ENCODE measurements at regions of chr6 and their contacts with region 1.

Region 1: DNA sequence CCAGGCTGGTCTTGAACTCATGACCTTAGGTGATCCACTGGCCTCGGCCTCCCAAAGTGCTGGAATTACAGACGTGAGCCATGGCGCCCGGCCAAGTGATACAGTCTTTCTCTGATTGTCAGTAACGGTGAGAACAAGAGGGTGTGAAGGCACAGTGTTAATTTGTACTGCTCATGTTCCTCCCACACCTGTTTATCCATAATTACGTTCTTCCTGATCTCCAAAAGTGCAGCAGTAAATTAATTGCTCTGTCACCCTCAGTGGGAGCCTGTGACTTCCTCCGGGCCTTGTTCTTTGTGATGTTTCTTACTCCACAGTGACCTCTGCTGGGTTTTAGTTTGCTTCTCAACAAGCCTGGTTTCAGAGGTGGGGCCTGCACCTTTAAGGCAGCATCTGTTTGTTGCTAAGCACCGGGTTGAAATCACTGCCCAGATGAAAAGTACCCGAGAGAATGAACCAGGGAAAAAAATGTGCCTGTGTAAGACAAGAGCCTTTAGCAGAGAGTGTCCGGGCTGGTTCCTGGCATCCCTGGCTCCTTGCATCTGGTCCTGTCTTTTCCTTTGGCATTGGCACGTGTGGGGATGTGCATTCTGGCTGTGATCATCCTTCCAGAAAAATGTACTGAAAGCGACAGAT is 89.1 kb upstream of the CLDN20 start:
- DNase-seq: peak; percentile 82
- ATAC-seq: peak; percentile 67
- H3K4me3 Mint-ChIP-seq: no peak overlapping the region
- H3K27ac Mint-ChIP-seq: peak overlapping the region; percentile 75
- H3K4me1 Mint-ChIP-seq: peaks cover 42% of the 10 kb centered on the region
- H3K27me3 Mint-ChIP-seq: no peaks in the 10 kb centered on the region

Region 2: GRCh38 chr6:154675602-154676088 is 499.0 kb before region 1 on chr6:
- CTCF ChIA-PET with region 1: interaction called, 36 read pairs
- POLR2A ChIA-PET with region 1: no interaction called
- DNase-seq: peak; percentile 92
- ATAC-seq: peak; percentile 100
- H3K4me3 Mint-ChIP-seq: no peak overlapping the region
- H3K27ac Mint-ChIP-seq: no peak overlapping the region
- H3K4me1 Mint-ChIP-seq: no peaks in the 10 kb centered on the region
- H3K27me3 Mint-ChIP-seq: peaks cover 4% of the 10 kb centered on the region

Region 3: DNA sequence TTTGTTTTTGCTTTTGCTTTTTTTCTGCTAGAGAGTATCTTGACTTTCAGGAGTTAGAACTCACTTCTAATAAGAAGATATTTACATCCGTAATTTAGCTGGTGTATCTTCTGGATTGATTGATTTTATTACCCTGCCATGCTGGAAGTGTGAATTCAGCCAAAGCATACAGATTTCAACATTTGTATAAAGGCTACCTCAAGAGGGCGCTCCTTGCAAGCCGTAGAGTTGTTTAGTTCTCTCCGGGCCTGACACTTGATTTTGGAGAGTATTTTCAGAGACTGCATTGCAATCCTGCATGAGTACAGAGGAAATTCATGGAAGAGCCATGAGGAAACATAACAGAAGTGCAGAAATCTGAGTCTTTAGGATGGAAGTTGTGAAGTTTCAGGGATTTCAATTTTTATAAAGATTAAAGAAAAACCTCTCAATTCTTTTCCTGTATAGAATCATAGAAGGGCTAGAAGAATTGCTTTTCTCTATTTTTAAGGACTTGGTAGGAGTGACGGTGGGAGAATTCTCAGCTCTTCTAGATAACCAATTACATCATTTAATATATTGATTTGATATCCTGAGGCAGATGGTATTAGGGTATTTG is 246.3 kb before region 1 on chr6:
- CTCF ChIA-PET with region 1: interaction called, 82 read pairs
- POLR2A ChIA-PET with region 1: interaction called, 7 read pairs
- DNase-seq: peak; percentile 80
- ATAC-seq: peak; percentile 77
- H3K4me3 Mint-ChIP-seq: no peak overlapping the region
- H3K27ac Mint-ChIP-seq: no peak overlapping the region
- H3K4me1 Mint-ChIP-seq: peaks cover 6% of the 10 kb centered on the region
- H3K27me3 Mint-ChIP-seq: no peaks in the 10 kb centered on the region

Region 4: GRCh38 chr6:155188707-155189496 is 14.2 kb after region 1 on chr6:
- CTCF ChIA-PET with region 1: interaction called, 13 read pairs
- POLR2A ChIA-PET with region 1: no interaction called
- DNase-seq: no peak
- ATAC-seq: no peak
- H3K4me3 Mint-ChIP-seq: no peak overlapping the region
- H3K27ac Mint-ChIP-seq: no peak overlapping the region
- H3K4me1 Mint-ChIP-seq: peaks cover 33% of the 10 kb centered on the region
- H3K27me3 Mint-ChIP-seq: no peaks in the 10 kb centered on the region

Region 5: GRCh38 chr6:155270561-155271091 is 95.9 kb after region 1 on chr6:
- CTCF ChIA-PET with region 1: interaction called, 12 read pairs
- POLR2A ChIA-PET with region 1: no interaction called
- DNase-seq: no peak
- ATAC-seq: no peak
- H3K4me3 Mint-ChIP-seq: no peak overlapping the region
- H3K27ac Mint-ChIP-seq: no peak overlapping the region
- H3K4me1 Mint-ChIP-seq: peaks cover 8% of the 10 kb centered on the region
- H3K27me3 Mint-ChIP-seq: no peaks in the 10 kb centered on the region